Activated CD4-positive, alpha-beta memory T cell treated with anti-CD3 and anti-CD28 coated beads, Interleukin-2, amount 10 ng/mL, durations not matched to agents 7 days and 5 days (primary cell): ENCODE measurements at regions of chr5 and their contacts with region 1.

Region 1: GRCh38 chr5:41903892-41904799 is at the start of gene RIMOC1:
- DNase-seq: peak; percentile 99
- H3K4me3 Mint-ChIP-seq: peak within 1 kb of the TSS; percentile 100
- H3K27ac Mint-ChIP-seq: peak within 1 kb of the TSS; percentile 98
- H3K4me1 Mint-ChIP-seq: peaks cover 57% of the 10 kb centered on the region
- H3K27me3 Mint-ChIP-seq: peaks cover 6% of the 10 kb centered on the region
- total RNA-seq, gene RIMOC1: 28.5 to 29.0 TPM

Region 2: GRCh38 chr5:41863871-41864486 is 40.2 kb before region 1 on chr5:
- CTCF ChIA-PET with region 1: interaction called, 6 read pairs
- POLR2A ChIA-PET with region 1: interaction called, 50 read pairs
- DNase-seq: no peak
- H3K4me3 Mint-ChIP-seq: no peak overlapping the region
- H3K27ac Mint-ChIP-seq: peak overlapping the region; percentile 2
- H3K4me1 Mint-ChIP-seq: peaks cover 60% of the 10 kb centered on the region
- H3K27me3 Mint-ChIP-seq: no peaks in the 10 kb centered on the region

Region 3: DNA sequence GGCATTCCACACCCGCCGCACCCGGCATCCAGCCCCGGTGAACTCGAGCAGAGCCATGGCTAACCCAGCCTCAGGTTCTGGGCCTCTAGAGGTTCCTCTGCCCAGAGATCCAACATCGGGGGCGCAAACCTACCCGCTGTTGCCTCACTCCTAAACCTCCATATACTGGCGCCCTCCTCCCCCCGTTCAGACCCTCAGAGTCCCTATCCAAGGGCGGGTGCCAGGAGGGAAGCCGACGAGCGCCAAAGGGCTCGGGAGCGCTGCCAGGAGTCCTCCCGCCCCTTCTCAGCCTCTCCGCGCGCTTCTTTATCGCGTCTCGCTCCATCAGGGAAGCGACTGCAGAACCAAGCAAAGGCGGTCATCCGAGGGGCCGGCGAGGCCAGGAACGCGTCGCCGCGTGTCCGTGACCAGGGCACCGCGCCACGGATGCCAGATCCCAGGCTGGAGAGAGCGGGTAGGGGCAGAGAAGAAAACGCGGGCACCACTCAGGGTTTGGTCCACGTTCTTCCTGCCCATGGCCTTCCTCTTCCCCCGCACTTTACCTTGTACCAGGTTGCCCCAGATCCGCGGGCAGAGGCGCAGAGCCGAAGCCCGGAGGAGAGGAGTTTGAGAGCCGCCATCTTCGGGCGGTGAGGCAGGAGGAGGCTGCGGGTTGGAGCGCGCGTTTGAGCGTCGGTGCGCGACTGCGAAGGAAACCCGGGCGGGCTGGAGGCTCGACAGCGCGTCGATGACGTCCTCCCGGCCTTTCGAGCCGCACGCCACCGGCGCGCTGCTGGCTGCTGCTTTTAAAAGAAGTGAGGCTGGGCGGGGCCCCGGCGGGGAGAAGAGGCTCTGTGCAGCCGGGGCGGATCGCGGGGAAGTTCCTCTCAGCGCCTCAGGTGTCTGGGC is 34.2 kb before region 1 on chr5 and contains the start of gene OXCT1:
- CTCF ChIA-PET with region 1: interaction called, 7 read pairs
- POLR2A ChIA-PET with region 1: interaction called, 50 read pairs
- DNase-seq: peak; percentile 95
- H3K4me3 Mint-ChIP-seq: peak within 1 kb of the TSS; percentile 90
- H3K27ac Mint-ChIP-seq: peak within 1 kb of the TSS; percentile 86
- H3K4me1 Mint-ChIP-seq: peaks cover 56% of the 10 kb centered on the region
- H3K27me3 Mint-ChIP-seq: no peaks in the 10 kb centered on the region
- total RNA-seq, gene OXCT1: 63.8 to 64.2 TPM

Region 4: GRCh38 chr5:41876678-41877077 is 27.5 kb before region 1 on chr5:
- CTCF ChIA-PET with region 1: interaction called, 4 read pairs
- POLR2A ChIA-PET with region 1: interaction called, 50 read pairs
- DNase-seq: no peak
- H3K4me3 Mint-ChIP-seq: no peak overlapping the region
- H3K27ac Mint-ChIP-seq: no peak overlapping the region
- H3K4me1 Mint-ChIP-seq: peaks cover 19% of the 10 kb centered on the region
- H3K27me3 Mint-ChIP-seq: no peaks in the 10 kb centered on the region

Region 5: GRCh38 chr5:41893074-41893851 is 10.9 kb before region 1 on chr5:
- CTCF ChIA-PET with region 1: interaction called, 6 read pairs
- POLR2A ChIA-PET with region 1: interaction called, 12 read pairs
- DNase-seq: no peak
- H3K4me3 Mint-ChIP-seq: peak overlapping the region; percentile 38
- H3K27ac Mint-ChIP-seq: peak overlapping the region; percentile 45
- H3K4me1 Mint-ChIP-seq: peaks cover 24% of the 10 kb centered on the region
- H3K27me3 Mint-ChIP-seq: peaks cover 21% of the 10 kb centered on the region

Region 6: GRCh38 chr5:41918105-41918504 is 14.0 kb after region 1 on chr5:
- CTCF ChIA-PET with region 1: no interaction called
- POLR2A ChIA-PET with region 1: interaction called, 14 read pairs
- DNase-seq: no peak
- H3K4me3 Mint-ChIP-seq: no peak overlapping the region
- H3K27ac Mint-ChIP-seq: no peak overlapping the region
- H3K4me1 Mint-ChIP-seq: peaks cover 4% of the 10 kb centered on the region
- H3K27me3 Mint-ChIP-seq: no peaks in the 10 kb centered on the region

Region 7: DNA sequence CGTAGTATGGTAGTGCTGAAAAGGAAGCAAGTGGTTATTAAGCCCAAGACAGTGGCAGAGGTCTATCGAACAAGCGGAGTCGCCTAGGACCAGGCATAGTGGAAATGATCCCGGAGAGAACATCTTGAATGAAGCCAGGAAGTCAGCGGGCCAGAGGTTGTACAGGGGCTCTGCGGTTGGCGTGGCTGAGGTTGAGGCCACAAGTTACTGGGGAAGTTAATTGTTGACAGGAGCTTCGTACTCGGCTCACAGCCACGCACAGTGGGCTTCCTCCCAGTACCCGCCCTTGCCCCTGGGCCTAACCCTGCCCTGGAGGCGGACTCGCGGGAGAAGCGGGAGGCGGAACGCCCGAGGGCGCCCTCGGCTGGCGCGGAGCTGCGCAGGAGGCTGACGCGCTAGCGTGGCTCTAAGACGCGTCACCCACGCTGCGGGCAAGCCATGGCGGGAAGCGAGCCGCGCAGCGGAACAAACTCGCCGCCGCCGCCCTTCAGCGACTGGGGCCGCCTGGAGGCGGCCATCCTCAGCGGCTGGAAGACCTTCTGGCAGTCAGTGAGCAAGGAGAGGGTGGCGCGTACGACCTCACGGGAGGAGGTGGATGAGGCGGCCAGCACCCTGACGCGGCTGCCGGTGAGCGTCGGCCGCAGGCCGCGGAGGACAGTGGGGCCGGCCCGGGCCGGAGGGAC is 20.9 kb after region 1 on chr5 and contains the start of gene FBXO4:
- CTCF ChIA-PET with region 1: interaction called, 16 read pairs
- POLR2A ChIA-PET with region 1: interaction called, 61 read pairs
- DNase-seq: peak; percentile 90
- H3K4me3 Mint-ChIP-seq: peak within 1 kb of the TSS; percentile 87
- H3K27ac Mint-ChIP-seq: peak within 1 kb of the TSS; percentile 92
- H3K4me1 Mint-ChIP-seq: peaks cover 19% of the 10 kb centered on the region
- H3K27me3 Mint-ChIP-seq: no peaks in the 10 kb centered on the region
- total RNA-seq, gene FBXO4: 13.3 to 13.6 TPM